Vagina (tissue), 2 donors: ENCODE measurements at regions of chr2 and their contacts with region 1.

Region 1: DNA sequence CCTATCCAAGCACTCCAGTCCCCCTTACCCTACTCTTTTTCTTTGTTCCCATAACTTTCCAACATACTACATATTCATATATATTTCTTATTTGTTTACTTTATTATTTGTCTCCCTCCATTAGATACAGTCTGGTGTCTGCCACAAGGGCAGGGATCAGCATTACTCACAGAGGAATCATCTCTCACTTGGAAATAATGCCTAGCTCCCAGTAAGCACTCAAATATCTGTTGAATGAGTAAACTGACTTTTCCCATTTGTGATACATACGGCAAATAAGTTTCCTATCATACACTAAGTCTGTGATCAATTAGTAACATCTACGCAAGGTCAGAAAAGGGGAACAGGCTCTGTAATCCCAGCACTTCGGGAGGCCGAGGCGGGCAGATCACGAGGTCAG is 18.7 kb downstream of the C1D start:
- DNase-seq: no peak
- H3K4me3 ChIP-seq: no peak overlapping the region
- H3K27ac ChIP-seq: peak overlapping the region; percentile 69
- H3K4me1 ChIP-seq: peaks cover 55% of the 10 kb centered on the region
- H3K27me3 ChIP-seq: no peaks in the 10 kb centered on the region
- CTCF ChIP-seq: no peak
- POLR2A ChIP-seq: no peak

Region 2: GRCh38 chr2:66171530-66171929 is 1872.6 kb before region 1 on chr2:
- intact Hi-C with region 1: loop called (anchors 5 kb)
- DNase-seq: no peak
- H3K4me3 ChIP-seq: no peak overlapping the region
- H3K27ac ChIP-seq: no peak overlapping the region
- H3K4me1 ChIP-seq: peaks cover 17% of the 10 kb centered on the region
- H3K27me3 ChIP-seq: no peaks in the 10 kb centered on the region
- CTCF ChIP-seq: no peak
- POLR2A ChIP-seq: no peak